Adrenal gland (tissue), 19 donors: ENCODE measurements at regions of chr4 and their contacts with region 1.

Region 1: GRCh38 chr4:17866810-17867209 is 56.0 kb downstream of the NCAPG start:
- DNase-seq: no peak
- H3K4me3 ChIP-seq: no peak overlapping the region
- H3K27ac ChIP-seq: no peak overlapping the region
- H3K4me1 ChIP-seq: no peaks in the 10 kb centered on the region
- H3K27me3 ChIP-seq: no peaks in the 10 kb centered on the region
- CTCF ChIP-seq: no peak
- POLR2A ChIP-seq: no peak

Region 2: DNA sequence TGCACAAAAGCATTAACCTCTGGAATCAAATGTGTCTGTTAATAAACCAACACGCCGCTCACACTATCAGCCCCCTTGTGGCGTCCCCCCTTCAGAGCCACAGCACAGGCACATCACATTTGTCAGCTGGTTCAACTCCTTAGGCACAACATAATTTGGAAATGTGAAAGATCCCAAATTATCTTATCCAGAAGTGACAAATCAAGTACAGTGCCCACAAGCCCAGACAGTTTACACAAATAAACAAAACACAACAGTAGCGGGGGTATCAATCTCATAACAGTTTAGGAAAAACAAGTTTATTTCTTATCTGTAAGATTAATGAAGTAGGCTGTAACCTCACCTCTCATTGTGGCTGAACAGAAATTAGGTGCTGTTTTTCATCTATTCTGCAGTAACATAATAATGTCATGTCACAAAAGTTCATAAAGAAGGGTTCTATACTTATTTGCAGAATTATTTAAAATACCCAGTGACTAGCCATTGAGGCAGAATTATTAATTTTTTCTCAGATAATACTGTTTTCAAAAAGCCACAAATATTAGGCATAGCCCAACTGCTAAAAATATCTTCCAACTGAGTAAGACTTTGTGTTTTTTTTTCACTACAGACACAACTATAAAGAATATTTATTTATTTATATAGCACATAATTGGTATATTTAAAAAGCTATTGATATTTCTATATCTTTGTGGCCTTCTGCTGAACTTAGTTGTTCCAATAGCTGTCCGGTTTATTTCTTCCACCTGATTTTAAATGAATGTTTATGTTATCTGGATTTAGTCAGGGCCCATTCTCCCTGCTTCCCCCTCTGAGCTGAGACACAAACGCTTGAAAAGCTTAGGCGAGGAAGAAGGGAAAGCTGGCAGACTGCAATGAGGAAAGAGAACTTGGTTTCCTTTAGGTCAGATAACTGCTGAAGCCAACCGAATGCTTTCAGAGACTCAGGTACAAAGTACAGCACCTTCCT is 569.6 kb before region 1 on chr4:
- intact Hi-C with region 1: no loop called
- DNase-seq: no peak
- H3K4me3 ChIP-seq: no peak overlapping the region
- H3K27ac ChIP-seq: no peak overlapping the region
- H3K4me1 ChIP-seq: no peaks in the 10 kb centered on the region
- H3K27me3 ChIP-seq: no peaks in the 10 kb centered on the region
- CTCF ChIP-seq: no peak
- POLR2A ChIP-seq: no peak

Region 3: DNA sequence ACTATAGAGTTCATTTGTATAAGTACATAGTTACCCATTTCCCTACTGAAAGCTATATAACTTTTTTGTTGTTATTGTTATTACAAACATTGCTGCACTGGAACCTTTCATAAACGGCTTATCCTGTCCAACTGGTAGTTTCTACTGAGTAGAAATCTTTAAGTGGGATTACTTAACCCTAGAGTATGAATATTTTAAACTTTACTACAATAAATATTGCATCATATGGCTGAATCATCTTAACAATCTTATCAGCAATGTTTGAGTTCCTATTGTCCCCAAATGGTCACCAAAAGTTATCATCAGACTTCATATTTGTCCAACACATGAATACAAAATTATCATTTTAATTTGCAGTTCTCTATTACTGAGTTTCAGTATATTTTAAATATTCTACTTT is 114.3 kb after region 1 on chr4:
- intact Hi-C with region 1: loop called in 1 of 2 experiments (anchors 10 kb)
- DNase-seq: no peak
- H3K4me3 ChIP-seq: no peak overlapping the region
- H3K27ac ChIP-seq: no peak overlapping the region
- H3K4me1 ChIP-seq: no peaks in the 10 kb centered on the region
- H3K27me3 ChIP-seq: no peaks in the 10 kb centered on the region
- CTCF ChIP-seq: no peak
- POLR2A ChIP-seq: no peak

Region 4: DNA sequence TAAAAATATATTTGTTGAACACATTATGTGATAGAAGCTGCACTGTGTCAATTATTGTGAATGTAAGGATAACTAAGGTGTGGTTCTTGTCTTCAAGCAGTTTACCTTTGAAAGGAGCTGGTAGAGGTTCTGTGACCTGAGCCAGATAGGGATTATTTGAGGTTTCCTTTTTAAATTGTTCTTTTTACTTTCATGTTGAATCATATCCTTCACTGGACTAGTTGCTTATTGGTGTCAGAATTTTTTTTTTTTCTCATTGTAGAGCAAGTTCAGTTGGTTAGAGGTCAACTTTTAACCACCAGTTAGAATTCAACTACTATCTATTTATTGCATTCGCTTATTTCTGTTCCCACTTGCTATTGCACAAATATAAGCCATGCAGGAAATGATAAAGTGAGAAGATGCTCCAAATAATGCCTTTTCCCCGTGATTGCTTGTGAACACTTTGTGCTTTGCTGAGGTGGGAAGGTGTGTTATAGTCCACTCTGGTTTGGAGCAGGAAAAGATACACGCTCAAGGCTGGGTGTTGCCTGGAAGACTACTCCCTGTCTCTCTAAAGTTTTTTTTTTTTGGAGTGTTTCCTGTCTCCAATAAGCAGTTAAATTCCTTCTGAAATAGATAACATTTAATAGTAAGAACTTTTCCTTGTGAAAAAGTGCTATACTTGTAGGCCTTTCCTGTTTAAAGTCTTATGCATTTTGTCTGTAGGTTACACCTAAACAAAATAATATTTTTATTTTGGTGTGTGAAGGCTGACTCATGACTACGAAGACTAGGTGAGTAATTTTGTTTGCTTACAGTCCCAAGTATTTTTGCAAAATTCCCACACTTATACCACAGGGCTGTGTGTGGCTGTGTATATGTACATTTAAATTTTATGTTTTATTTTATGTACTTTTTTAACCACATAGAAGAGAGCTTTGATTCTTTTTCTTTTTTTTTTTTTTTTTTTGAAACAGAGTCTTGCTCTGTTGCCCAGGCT is 238.5 kb after region 1 on chr4:
- intact Hi-C with region 1: no loop called
- DNase-seq: no peak
- H3K4me3 ChIP-seq: no peak overlapping the region
- H3K27ac ChIP-seq: no peak overlapping the region
- H3K4me1 ChIP-seq: no peaks in the 10 kb centered on the region
- H3K27me3 ChIP-seq: no peaks in the 10 kb centered on the region
- CTCF ChIP-seq: no peak
- POLR2A ChIP-seq: no peak